T-cell (primary cell): ENCODE measurements at regions of chr21 and their contacts with region 1.

Region 1: DNA sequence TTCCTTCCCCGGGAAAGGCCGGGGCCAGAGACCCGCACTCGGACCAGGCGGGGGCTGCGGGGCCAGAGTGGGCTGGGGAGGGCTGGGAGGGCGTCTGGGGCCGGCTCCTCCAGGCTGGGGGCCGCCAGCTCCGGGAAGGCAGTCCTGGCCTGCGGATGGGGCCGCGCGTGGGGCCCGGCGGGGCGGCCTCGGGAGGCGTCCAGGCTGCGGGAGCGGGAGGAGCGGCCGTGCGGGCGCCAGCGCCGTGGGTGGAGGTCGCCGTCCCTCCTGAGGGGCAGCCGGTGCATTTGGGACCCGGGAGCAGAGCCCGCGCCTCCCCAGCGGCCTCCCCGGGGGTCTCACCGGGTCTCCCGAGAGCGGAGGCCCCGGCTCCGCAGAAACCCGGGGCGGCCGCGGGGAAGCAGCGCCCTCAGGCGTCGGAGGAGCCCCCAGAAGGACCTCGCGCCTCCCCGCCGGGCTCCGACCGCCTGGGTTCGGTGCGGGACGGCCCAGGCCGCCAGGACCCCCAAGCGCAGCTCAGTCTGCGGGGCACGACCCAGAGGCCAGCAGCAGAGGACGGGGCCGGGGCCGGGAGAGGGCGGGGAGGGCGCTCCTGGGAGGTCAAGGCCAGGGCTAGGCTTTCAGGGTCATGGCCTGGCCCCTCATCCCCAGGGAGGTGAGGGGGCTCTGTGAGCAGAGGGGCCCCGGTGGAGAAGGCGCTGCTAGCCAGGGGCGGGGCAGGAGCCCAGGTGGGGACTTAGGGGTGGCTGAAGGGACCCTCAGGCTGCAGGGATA is 7.2 kb upstream of the SLX9 start:
- DNase-seq: peak; percentile 23 to 80 (median 64)
- ATAC-seq: peak; percentile 68 to 74 (median 70)
- H3K4me3 ChIP-seq: peak overlapping the region; percentile 60 to 63
- H3K4me3 Mint-ChIP-seq: peak overlapping the region; percentile 69 to 100 (median 84)
- H3K27ac ChIP-seq: no peak overlapping the region
- H3K27ac Mint-ChIP-seq: no peak overlapping the region
- H3K4me1 ChIP-seq: peaks cover 14 to 57% of the 10 kb centered on the region in 2 experiments
- H3K4me1 Mint-ChIP-seq: peaks cover 36 to 38% (median 37%) of the 10 kb centered on the region in 3 donors
- H3K27me3 ChIP-seq: peaks cover 0 to 4% of the 10 kb centered on the region in 2 experiments
- H3K27me3 Mint-ChIP-seq: no peaks in the 10 kb centered on the region

Region 2: DNA sequence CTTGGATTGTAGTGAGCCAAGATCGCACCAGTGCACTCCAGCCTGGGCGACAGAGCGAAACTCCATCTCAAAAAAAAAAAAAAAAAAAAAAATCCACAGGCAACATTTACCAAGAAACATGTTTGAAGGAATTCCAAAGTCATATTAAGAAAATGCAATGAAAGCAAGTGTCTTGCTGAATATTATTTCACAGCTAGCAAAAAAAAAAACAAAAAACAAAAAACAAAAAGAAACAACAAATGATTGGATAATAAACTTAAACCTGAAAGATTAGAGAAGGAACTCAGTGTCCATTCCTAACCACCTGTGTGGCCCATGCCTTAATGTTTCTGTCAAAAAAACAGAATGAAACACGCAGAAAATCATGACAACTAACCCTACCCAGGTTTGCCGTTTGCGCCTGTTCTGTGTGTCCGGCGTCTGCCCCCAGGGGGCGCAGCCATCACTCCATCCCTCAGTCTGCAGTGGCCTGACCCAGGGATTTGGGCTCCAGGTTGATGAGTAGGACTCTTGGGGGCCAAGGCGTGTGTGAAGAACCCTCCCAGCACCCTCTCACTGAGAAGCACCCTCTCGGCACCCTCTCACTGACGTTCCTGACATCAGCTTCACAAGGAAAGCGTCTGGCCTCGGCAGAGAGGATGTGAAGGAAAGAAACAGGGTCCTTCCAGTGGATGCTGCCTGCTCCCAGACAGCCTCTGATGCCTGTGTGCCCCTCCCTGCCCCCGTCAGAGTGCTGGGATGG is 39.9 kb before region 1 on chr21:
- CTCF ChIA-PET with region 1: interaction called, 6 to 15 read pairs
- POLR2A ChIA-PET with region 1: no interaction called
- DNase-seq: peak; percentile 40 to 87 (median 70)
- ATAC-seq: peak; percentile 76 to 89 (median 82)
- H3K4me3 ChIP-seq: no peak overlapping the region
- H3K4me3 Mint-ChIP-seq: no peak overlapping the region
- H3K27ac ChIP-seq: peak overlapping the region; percentile 14
- H3K27ac Mint-ChIP-seq: peak overlapping the region; percentile 77 to 80
- H3K4me1 ChIP-seq: peaks cover 3 to 51% of the 10 kb centered on the region in 2 experiments
- H3K4me1 Mint-ChIP-seq: peaks cover 9 to 21% (median 18%) of the 10 kb centered on the region in 3 donors
- H3K27me3 ChIP-seq: no peaks in the 10 kb centered on the region
- H3K27me3 Mint-ChIP-seq: no peaks in the 10 kb centered on the region

Region 3: GRCh38 chr21:44955141-44955797 is 22.7 kb after region 1 on chr21:
- CTCF ChIA-PET with region 1: no interaction called
- POLR2A ChIA-PET with region 1: no interaction called
- DNase-seq: no peak
- ATAC-seq: no peak
- H3K4me3 ChIP-seq: no peak overlapping the region
- H3K4me3 Mint-ChIP-seq: no peak overlapping the region
- H3K27ac ChIP-seq: no peak overlapping the region
- H3K27ac Mint-ChIP-seq: no peak overlapping the region
- H3K4me1 ChIP-seq: peaks cover 0 to 6% of the 10 kb centered on the region in 2 experiments
- H3K4me1 Mint-ChIP-seq: peaks cover 6 to 11% (median 7%) of the 10 kb centered on the region in 3 donors
- H3K27me3 ChIP-seq: no peaks in the 10 kb centered on the region
- H3K27me3 Mint-ChIP-seq: no peaks in the 10 kb centered on the region

Region 4: DNA sequence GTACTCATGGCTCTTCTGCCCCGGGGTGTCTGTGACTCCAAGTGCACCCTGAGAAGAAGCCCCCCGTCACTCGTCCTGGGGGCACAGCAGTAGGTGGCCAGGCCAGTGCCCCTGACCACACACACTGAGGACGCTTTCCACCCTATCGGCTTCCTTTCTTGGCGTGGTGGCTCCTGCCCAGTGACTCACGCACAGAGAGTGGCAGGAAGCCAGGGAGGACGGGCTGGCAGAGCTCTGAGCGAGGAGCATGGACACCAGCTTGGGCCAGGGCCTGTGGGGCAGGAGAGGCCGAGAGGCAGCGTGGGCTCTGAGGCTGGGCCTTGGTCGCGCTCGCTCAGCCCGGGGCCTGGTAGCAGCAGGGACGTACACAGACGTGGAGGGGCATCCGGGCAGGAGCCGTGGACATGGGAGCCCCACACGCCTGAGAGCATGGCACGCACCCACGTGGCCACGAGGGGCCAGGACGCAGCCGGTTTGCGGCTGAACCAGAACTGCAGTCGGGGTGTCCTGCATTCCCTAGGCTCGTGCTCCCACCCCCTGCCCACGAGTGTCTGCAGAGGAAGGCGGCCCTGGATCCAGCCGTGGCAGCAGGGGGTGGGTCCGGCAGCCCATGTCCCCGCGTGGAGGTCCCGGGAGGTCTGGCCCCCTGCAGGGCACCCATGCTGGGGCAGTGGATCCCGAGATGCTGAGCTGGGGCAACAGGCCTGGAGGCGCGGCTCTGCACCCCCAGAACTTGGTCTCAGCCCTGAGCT is 68.6 kb after region 1 on chr21:
- CTCF ChIA-PET with region 1: no interaction called
- POLR2A ChIA-PET with region 1: no interaction called
- DNase-seq: no peak
- ATAC-seq: no peak
- H3K4me3 ChIP-seq: no peak overlapping the region
- H3K4me3 Mint-ChIP-seq: no peak overlapping the region
- H3K27ac ChIP-seq: no peak overlapping the region
- H3K27ac Mint-ChIP-seq: no peak overlapping the region
- H3K4me1 ChIP-seq: no peaks in the 10 kb centered on the region
- H3K4me1 Mint-ChIP-seq: no peaks in the 10 kb centered on the region
- H3K27me3 ChIP-seq: peaks cover 0 to 40% of the 10 kb centered on the region in 2 experiments
- H3K27me3 Mint-ChIP-seq: peaks cover 0 to 5% of the 10 kb centered on the region in 2 donors